ENCODE measurements at regions of chr18 and their contacts with region 1.

Region 1: GRCh38 chr18:46173393-46174341 is 69.5 kb downstream of the HAUS1 start:
- DNase-seq: peak; percentile 90 to 94 (median 91)
- H3K4me3 ChIP-seq: peak overlapping the region; percentile 93 to 100
- H3K4me3 Mint-ChIP-seq: peak overlapping the region; percentile 97 to 99 (median 98)
- H3K27ac ChIP-seq: peak overlapping the region; percentile 91
- H3K27ac Mint-ChIP-seq: peak overlapping the region; percentile 96 to 100 (median 99)
- H3K4me1 ChIP-seq: peaks cover 42% of the 10 kb centered on the region
- H3K4me1 Mint-ChIP-seq: peaks cover 20 to 67% (median 28%) of the 10 kb centered on the region in 4 donors
- H3K27me3 ChIP-seq: no peaks in the 10 kb centered on the region
- H3K27me3 Mint-ChIP-seq: no peaks in the 10 kb centered on the region

Region 2: DNA sequence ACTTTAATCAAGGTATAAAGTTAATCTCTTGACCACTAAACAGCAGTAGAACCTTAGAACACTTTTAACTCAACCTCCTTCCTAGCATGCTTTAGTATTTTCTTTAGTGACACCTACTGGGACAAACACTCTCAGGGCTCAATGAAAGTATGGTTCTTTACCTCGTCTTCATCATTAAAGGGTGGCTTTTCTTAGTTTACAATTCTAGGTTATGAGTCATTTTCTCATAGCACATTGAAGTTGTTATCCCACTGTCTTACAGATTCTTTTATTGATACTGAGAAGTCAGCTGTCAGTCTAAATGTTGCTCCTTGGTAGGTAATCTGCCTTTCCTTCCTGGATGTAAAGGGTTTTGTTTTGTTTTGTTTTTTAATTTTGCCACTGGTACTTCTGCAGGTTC is 310.2 kb before region 1 on chr18:
- CTCF ChIA-PET with region 1: no interaction called
- POLR2A ChIA-PET with region 1: no interaction called
- intact Hi-C with region 1: no loop called
- DNase-seq: no peak
- H3K4me3 ChIP-seq: no peak overlapping the region
- H3K4me3 Mint-ChIP-seq: no peak overlapping the region
- H3K27ac ChIP-seq: no peak overlapping the region
- H3K27ac Mint-ChIP-seq: peak overlapping the region in 2 of 7 donors; percentile 7 to 24
- H3K4me1 ChIP-seq: no peaks in the 10 kb centered on the region
- H3K4me1 Mint-ChIP-seq: peaks cover 0 to 2% (median 0%) of the 10 kb centered on the region in 4 donors
- H3K27me3 ChIP-seq: no peaks in the 10 kb centered on the region
- H3K27me3 Mint-ChIP-seq: no peaks in the 10 kb centered on the region

Region 3: DNA sequence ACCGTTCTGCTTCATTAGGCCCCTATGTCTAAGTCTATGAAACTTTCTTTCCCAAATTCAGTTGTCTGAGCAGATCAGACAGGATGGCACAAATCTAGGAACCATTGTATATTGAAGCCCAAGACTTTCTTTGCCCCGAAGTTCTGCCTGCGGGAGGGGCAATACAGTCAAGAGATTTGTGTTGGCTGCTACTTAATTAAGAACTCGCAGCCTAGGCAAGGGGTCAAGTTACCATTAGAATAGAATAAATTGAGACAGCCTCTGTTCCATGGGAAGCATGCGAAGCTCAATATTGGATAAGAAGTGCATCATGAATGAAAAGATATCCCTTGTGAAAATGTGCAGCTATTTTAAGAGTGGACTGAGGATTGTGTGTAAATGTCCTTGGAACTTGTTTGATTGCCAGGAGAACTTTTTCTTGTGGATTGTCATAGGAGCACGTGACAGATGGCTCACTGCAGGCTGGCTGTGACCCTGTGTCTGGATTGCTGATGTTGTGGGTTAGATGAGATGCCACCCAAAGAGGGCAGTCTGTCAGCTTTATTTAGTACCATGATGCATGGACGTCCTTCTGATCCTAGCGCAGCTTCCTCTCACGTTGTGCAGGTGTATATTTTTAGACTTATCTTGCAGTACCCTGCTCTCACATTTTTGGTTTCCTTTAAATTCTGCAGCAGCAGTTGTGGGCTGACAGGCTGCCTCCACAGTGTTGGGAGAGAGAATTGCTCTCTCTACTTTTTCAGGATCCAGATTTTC is 38.6 kb before region 1 on chr18:
- CTCF ChIA-PET with region 1: interaction called, 10 read pairs
- POLR2A ChIA-PET with region 1: no interaction called
- intact Hi-C with region 1: no loop called
- DNase-seq: no peak
- H3K4me3 ChIP-seq: no peak overlapping the region
- H3K4me3 Mint-ChIP-seq: no peak overlapping the region
- H3K27ac ChIP-seq: no peak overlapping the region
- H3K27ac Mint-ChIP-seq: peak overlapping the region in 3 of 7 donors; percentile 24 to 56 (median 35)
- H3K4me1 ChIP-seq: no peaks in the 10 kb centered on the region
- H3K4me1 Mint-ChIP-seq: no peaks in the 10 kb centered on the region
- H3K27me3 ChIP-seq: no peaks in the 10 kb centered on the region
- H3K27me3 Mint-ChIP-seq: no peaks in the 10 kb centered on the region

Region 4: GRCh38 chr18:46190667-46191066 is 17.0 kb after region 1 on chr18:
- CTCF ChIA-PET with region 1: interaction called, 44 read pairs
- POLR2A ChIA-PET with region 1: interaction called, 3 read pairs
- intact Hi-C with region 1: no loop called
- DNase-seq: no peak
- H3K4me3 ChIP-seq: no peak overlapping the region
- H3K4me3 Mint-ChIP-seq: peak overlapping the region in 2 of 8 donors; percentile 1 to 10
- H3K27ac ChIP-seq: no peak overlapping the region
- H3K27ac Mint-ChIP-seq: peak overlapping the region in 3 of 7 donors; percentile 20 to 66 (median 31)
- H3K4me1 ChIP-seq: peaks cover 33% of the 10 kb centered on the region
- H3K4me1 Mint-ChIP-seq: peaks cover 19 to 37% (median 28%) of the 10 kb centered on the region in 4 donors
- H3K27me3 ChIP-seq: no peaks in the 10 kb centered on the region
- H3K27me3 Mint-ChIP-seq: no peaks in the 10 kb centered on the region

Region 5: DNA sequence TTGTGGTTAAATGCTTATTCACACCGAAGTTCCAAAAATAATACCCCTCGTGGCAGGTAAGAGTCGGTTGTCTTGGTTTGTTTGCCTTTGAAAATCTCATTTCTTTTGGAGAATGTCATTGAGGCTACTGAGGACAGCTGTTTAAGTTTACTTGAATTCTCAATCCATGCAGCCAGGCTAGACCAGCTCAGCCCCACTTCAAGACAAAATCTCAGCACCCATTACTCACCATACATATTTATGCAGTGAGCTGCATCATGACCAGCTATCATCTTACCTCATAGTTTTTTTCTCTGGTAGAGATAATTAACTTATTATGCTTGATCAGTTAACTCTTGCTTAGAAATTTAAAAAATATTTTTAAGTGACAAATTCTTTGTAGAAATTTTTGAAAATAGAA is 46.4 kb after region 1 on chr18:
- CTCF ChIA-PET with region 1: interaction called, 80 read pairs
- POLR2A ChIA-PET with region 1: interaction called, 3 read pairs
- intact Hi-C with region 1: no loop called
- DNase-seq: no peak
- H3K4me3 ChIP-seq: no peak overlapping the region
- H3K4me3 Mint-ChIP-seq: no peak overlapping the region
- H3K27ac ChIP-seq: no peak overlapping the region
- H3K27ac Mint-ChIP-seq: peak overlapping the region in 2 of 7 donors; percentile 15 to 43
- H3K4me1 ChIP-seq: peaks cover 60% of the 10 kb centered on the region
- H3K4me1 Mint-ChIP-seq: peaks cover 49 to 87% (median 78%) of the 10 kb centered on the region in 4 donors
- H3K27me3 ChIP-seq: no peaks in the 10 kb centered on the region
- H3K27me3 Mint-ChIP-seq: no peaks in the 10 kb centered on the region

Region 6: GRCh38 chr18:46250084-46250811 is 76.6 kb after region 1 on chr18:
- CTCF ChIA-PET with region 1: interaction called, 18 read pairs
- POLR2A ChIA-PET with region 1: interaction called, 17 read pairs
- intact Hi-C with region 1: loop called (anchors 1 kb)
- DNase-seq: peak; percentile 73 to 82 (median 77)
- H3K4me3 ChIP-seq: peak overlapping the region in 1 of 2 donors; percentile 48
- H3K4me3 Mint-ChIP-seq: peak overlapping the region; percentile 80 to 97 (median 91)
- H3K27ac ChIP-seq: peak overlapping the region; percentile 77
- H3K27ac Mint-ChIP-seq: peak overlapping the region; percentile 94 to 99 (median 97)
- H3K4me1 ChIP-seq: peaks cover 39% of the 10 kb centered on the region
- H3K4me1 Mint-ChIP-seq: peaks cover 40 to 50% (median 44%) of the 10 kb centered on the region in 4 donors
- H3K27me3 ChIP-seq: no peaks in the 10 kb centered on the region
- H3K27me3 Mint-ChIP-seq: peaks cover 0 to 2% of the 10 kb centered on the region in 2 donors

Region 7: GRCh38 chr18:46481048-46481846 is 307.6 kb after region 1 on chr18:
- CTCF ChIA-PET with region 1: interaction called, 13 read pairs
- POLR2A ChIA-PET with region 1: no interaction called
- intact Hi-C with region 1: no loop called
- DNase-seq: peak in 4 of 5 donors; percentile 36 to 52 (median 44)
- H3K4me3 ChIP-seq: no peak overlapping the region
- H3K4me3 Mint-ChIP-seq: no peak overlapping the region
- H3K27ac ChIP-seq: no peak overlapping the region
- H3K27ac Mint-ChIP-seq: no peak overlapping the region
- H3K4me1 ChIP-seq: no peaks in the 10 kb centered on the region
- H3K4me1 Mint-ChIP-seq: peaks cover 0 to 6% (median 2%) of the 10 kb centered on the region in 4 donors
- H3K27me3 ChIP-seq: no peaks in the 10 kb centered on the region
- H3K27me3 Mint-ChIP-seq: peaks cover 8 to 12% of the 10 kb centered on the region in 2 donors

Region 8: GRCh38 chr18:46917108-46917802 is 743.6 kb after region 1 on chr18 and contains the starts of genes KATNAL2 and PIAS2:
- CTCF ChIA-PET with region 1: interaction called, 4 read pairs
- POLR2A ChIA-PET with region 1: interaction called, 3 read pairs
- intact Hi-C with region 1: loop called (anchors 10 kb)
- DNase-seq: peak; percentile 72 to 79 (median 73)
- H3K4me3 ChIP-seq: peak within 1 kb of the TSS; percentile 60 to 66
- H3K4me3 Mint-ChIP-seq: peak within 1 kb of the TSS; percentile 91 to 96 (median 92)
- H3K27ac ChIP-seq: peak within 1 kb of the TSS; percentile 40
- H3K27ac Mint-ChIP-seq: peak within 1 kb of the TSS; percentile 89 to 95 (median 91)
- H3K4me1 ChIP-seq: peaks cover 27% of the 10 kb centered on the region
- H3K4me1 Mint-ChIP-seq: peaks cover 35 to 56% (median 47%) of the 10 kb centered on the region in 4 donors
- H3K27me3 ChIP-seq: no peaks in the 10 kb centered on the region
- H3K27me3 Mint-ChIP-seq: no peaks in the 10 kb centered on the region
- total RNA-seq, gene KATNAL2: 0.94 to 2.1 TPM
- total RNA-seq, gene PIAS2: 36.2 to 38.3 TPM

Region 9: DNA sequence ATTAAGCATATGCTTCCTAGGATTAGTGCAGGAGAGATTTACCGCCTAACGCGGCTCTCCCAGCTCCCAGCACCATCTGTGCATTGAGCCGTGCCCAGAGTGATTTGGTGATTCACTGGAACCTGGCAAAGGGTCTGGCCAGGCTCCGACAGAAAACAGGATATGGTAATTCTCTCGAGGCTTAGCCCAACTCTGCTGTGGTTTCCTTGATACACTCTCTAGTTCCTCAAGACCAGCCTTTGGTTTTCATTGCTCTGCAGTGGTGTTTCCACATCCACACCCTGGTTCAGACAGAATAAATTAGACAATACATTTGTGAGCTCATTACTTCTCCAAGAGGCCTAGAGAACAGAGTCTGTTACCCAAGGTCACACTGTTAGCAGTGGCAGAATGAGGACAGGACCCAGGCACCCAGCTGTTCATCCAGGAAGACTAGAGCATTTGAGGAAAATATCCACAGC is 1779.8 kb after region 1 on chr18:
- CTCF ChIA-PET with region 1: no interaction called
- POLR2A ChIA-PET with region 1: no interaction called
- intact Hi-C with region 1: no loop called
- DNase-seq: peak in 3 of 5 donors; percentile 9 to 24 (median 16)
- H3K4me3 ChIP-seq: no peak overlapping the region
- H3K4me3 Mint-ChIP-seq: peak overlapping the region in 7 of 8 donors; percentile 31 to 87 (median 66)
- H3K27ac ChIP-seq: no peak overlapping the region
- H3K27ac Mint-ChIP-seq: peak overlapping the region; percentile 33 to 89 (median 84)
- H3K4me1 ChIP-seq: peaks cover 10% of the 10 kb centered on the region
- H3K4me1 Mint-ChIP-seq: peaks cover 6 to 19% (median 9%) of the 10 kb centered on the region in 4 donors
- H3K27me3 ChIP-seq: no peaks in the 10 kb centered on the region
- H3K27me3 Mint-ChIP-seq: peaks cover 1 to 2% of the 10 kb centered on the region in 2 donors